ENCODE measurements at regions of chr2 and their contacts with region 1.

Region 1: GRCh38 chr2:237744613-237745249 is 53.8 kb upstream of the RBM44 start:
- DNase-seq: no peak
- H3K4me3 ChIP-seq: no peak overlapping the region
- H3K27me3 ChIP-seq: no peaks in the 10 kb centered on the region
- CTCF ChIP-seq: peak; percentile 99

Region 2: GRCh38 chr2:237581751-237582746 is 162.7 kb before region 1 on chr2:
- CTCF ChIA-PET with region 1: interaction called, 97 read pairs
- POLR2A ChIA-PET with region 1: no interaction called
- DNase-seq: no peak
- H3K4me3 ChIP-seq: 0 out of 2 replicates have a peak overlapping the region, but pooled peaks have one; percentile 15
- H3K27me3 ChIP-seq: peaks cover 3% of the 10 kb centered on the region; the same call in 1 of the 2 replicates
- CTCF ChIP-seq: peak; percentile 55

Region 3: GRCh38 chr2:237674731-237675276 is 69.9 kb before region 1 on chr2:
- CTCF ChIA-PET with region 1: interaction called, 45 read pairs
- POLR2A ChIA-PET with region 1: no interaction called
- DNase-seq: peak; percentile 47
- H3K4me3 ChIP-seq: no peak overlapping the region
- H3K27me3 ChIP-seq: no peaks in the 10 kb centered on the region
- CTCF ChIP-seq: no peak

Region 4: DNA sequence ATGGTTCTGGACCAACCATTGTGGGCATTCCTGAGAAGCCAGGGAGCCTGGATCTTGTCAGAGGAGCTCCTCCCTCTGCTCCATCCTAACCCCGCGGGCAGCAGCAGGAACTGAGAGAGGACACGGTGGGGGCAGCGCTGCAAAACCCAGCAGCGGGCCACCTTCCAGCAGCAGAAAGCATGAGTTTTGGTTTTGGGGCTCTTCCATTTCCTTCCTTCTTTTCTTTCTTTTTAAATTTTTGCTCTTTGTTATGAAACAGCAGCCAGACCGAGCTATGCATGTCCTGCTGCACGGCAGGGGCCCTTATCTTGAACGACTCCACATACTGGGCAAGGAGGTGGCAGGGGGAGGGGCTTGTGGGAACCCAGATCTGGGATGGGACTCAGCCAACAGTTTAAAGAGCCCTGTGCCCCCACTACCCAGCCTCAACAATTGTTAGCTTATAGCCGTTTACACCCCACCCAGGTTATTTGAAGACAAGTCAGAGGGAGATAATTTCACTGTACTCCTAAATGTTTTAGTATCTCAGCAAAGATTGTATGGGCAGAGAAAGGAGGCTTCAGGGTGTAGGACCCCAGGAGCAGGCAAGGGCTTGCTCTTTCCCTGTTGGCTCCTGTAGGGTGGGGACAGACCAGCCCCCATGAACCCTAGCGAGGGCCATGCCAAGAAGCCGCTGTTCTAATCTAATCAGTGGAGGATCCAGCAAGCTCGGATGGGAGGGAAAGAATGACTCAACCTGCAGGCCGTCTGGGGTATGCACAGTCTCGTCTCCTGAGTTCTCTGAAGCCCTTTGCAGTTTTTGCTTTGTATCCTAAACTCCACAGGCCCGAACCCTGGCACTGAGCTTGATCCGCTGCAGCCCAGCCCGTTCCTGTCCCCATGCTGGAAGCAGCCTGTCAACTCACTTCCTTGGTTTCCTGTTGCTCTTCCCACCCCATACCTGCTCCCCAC is 42.0 kb before region 1 on chr2:
- CTCF ChIA-PET with region 1: interaction called, 13 read pairs
- POLR2A ChIA-PET with region 1: no interaction called
- DNase-seq: no peak
- H3K4me3 ChIP-seq: no peak overlapping the region
- H3K27me3 ChIP-seq: no peaks in the 10 kb centered on the region
- CTCF ChIP-seq: peak; percentile 23; the same call in 1 of the 2 replicates

Region 5: GRCh38 chr2:237774802-237775553 is 30.2 kb after region 1 on chr2:
- CTCF ChIA-PET with region 1: interaction called, 11 read pairs
- POLR2A ChIA-PET with region 1: no interaction called
- DNase-seq: no peak
- H3K4me3 ChIP-seq: no peak overlapping the region
- H3K27me3 ChIP-seq: no peaks in the 10 kb centered on the region
- CTCF ChIP-seq: peak; percentile 70

Region 6: GRCh38 chr2:237996021-237996593 is 251.4 kb after region 1 on chr2:
- CTCF ChIA-PET with region 1: no interaction called
- POLR2A ChIA-PET with region 1: no interaction called
- DNase-seq: peak; percentile 50
- H3K4me3 ChIP-seq: no peak overlapping the region
- H3K27me3 ChIP-seq: no peaks in the 10 kb centered on the region
- CTCF ChIP-seq: no peak